Tibial artery (tissue), 4 donors: ENCODE measurements at regions of chr2 and their contacts with region 1.

Region 1: GRCh38 chr2:119659601-119660342 is 19.2 kb upstream of the TMEM177 start:
- DNase-seq: no peak
- H3K4me3 ChIP-seq: no peak overlapping the region
- H3K27ac ChIP-seq: no peak overlapping the region
- H3K4me1 ChIP-seq: no peaks in the 10 kb centered on the region
- H3K27me3 ChIP-seq: peaks cover 0 to 4% of the 10 kb centered on the region in 2 donors
- CTCF ChIP-seq: peak; percentile 69 to 81

Region 2: DNA sequence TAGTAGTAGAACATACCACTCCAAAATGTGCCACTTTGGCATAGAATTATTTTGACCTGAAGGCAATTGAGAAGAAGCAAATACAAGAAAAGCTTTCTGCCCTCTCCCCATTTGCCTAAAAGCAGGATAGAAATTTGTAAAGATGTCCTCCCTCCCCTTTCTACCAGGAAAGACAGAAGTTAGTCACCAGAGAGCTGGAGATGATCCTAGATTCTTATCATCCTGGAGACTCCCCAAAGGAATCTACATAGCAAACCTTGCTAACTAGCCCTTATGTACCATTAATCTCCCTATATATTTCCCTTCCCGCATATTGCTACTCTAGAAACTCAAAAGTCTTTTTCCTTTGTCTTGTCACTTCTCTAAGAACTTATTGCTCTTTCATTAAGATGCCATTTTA is 240.7 kb before region 1 on chr2:
- intact Hi-C with region 1: loop called (anchors 10 kb)
- DNase-seq: no peak
- H3K4me3 ChIP-seq: no peak overlapping the region
- H3K27ac ChIP-seq: no peak overlapping the region
- H3K4me1 ChIP-seq: no peaks in the 10 kb centered on the region
- H3K27me3 ChIP-seq: no peaks in the 10 kb centered on the region
- CTCF ChIP-seq: no peak